ENCODE measurements at regions of chr1 and their contacts with region 1.

Region 1: GRCh38 chr1:173429471-173430402 is 47.4 kb upstream of the PRDX6 start:
- DNase-seq: peak; percentile 86
- H3K4me3 Mint-ChIP-seq: peak overlapping the region; percentile 42
- H3K27ac Mint-ChIP-seq: peak overlapping the region; percentile 43
- H3K4me1 Mint-ChIP-seq: peaks cover 16% of the 10 kb centered on the region
- H3K27me3 Mint-ChIP-seq: no peaks in the 10 kb centered on the region

Region 2: GRCh38 chr1:172117800-172118199 is 1311.9 kb before region 1 on chr1:
- CTCF ChIA-PET with region 1: no interaction called
- intact Hi-C with region 1: no loop called
- DNase-seq: peak; percentile 47
- H3K4me3 Mint-ChIP-seq: no peak overlapping the region
- H3K27ac Mint-ChIP-seq: no peak overlapping the region
- H3K4me1 Mint-ChIP-seq: peaks cover 27% of the 10 kb centered on the region
- H3K27me3 Mint-ChIP-seq: no peaks in the 10 kb centered on the region

Region 3: DNA sequence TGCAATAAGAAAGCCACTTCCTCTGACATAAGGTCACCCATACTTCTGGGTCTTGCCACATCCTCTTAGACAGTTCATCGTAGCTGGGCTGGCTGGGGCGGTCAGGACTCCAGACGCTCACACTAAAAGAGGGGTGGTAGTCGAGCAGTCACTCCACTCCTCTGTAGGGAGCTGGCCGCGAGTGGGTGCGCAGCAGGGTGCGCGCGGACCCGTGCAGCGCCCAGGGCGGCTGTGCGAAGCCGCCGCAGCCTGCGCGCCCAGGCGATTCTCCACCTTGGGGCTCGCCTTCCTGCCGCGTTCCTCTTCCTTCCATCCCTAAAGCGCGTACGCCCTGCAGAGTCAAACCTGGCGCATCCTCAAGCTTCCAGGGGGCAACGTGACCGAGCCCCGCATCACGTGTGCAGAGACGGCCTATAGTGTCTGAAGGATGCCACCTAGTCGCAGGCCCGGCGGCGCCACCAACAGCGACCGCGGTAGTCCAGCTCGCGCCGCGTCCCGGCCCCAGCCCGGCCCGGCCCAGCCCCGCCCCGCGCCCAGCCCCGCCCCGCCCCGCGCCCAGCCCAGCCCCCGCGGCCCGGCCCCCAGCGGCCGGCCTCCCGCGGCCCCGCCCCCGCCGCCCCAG is 47.0 kb after region 1 on chr1:
- CTCF ChIA-PET with region 1: interaction called, 31 read pairs
- intact Hi-C with region 1: loop called (anchors 1 kb)
- DNase-seq: peak; percentile 86
- H3K4me3 Mint-ChIP-seq: peak overlapping the region; percentile 91
- H3K27ac Mint-ChIP-seq: peak overlapping the region; percentile 93
- H3K4me1 Mint-ChIP-seq: peaks cover 58% of the 10 kb centered on the region
- H3K27me3 Mint-ChIP-seq: no peaks in the 10 kb centered on the region

Region 4: GRCh38 chr1:173628888-173629287 is 199.2 kb after region 1 on chr1:
- CTCF ChIA-PET with region 1: interaction called, 6 read pairs
- intact Hi-C with region 1: loop called (anchors 2 kb)
- DNase-seq: peak; percentile 27
- H3K4me3 Mint-ChIP-seq: no peak overlapping the region
- H3K27ac Mint-ChIP-seq: no peak overlapping the region
- H3K4me1 Mint-ChIP-seq: no peaks in the 10 kb centered on the region
- H3K27me3 Mint-ChIP-seq: no peaks in the 10 kb centered on the region

Region 5: GRCh38 chr1:173771560-173771959 is 341.8 kb after region 1 on chr1:
- CTCF ChIA-PET with region 1: interaction called, 4 read pairs
- intact Hi-C with region 1: loop called (anchors 5 kb)
- DNase-seq: no peak
- H3K4me3 Mint-ChIP-seq: no peak overlapping the region
- H3K27ac Mint-ChIP-seq: no peak overlapping the region
- H3K4me1 Mint-ChIP-seq: peaks cover 12% of the 10 kb centered on the region
- H3K27me3 Mint-ChIP-seq: no peaks in the 10 kb centered on the region

Region 6: GRCh38 chr1:174074757-174075156 is 645.0 kb after region 1 on chr1:
- CTCF ChIA-PET with region 1: no interaction called
- intact Hi-C with region 1: loop called (anchors 1 kb)
- DNase-seq: no peak
- H3K4me3 Mint-ChIP-seq: no peak overlapping the region
- H3K27ac Mint-ChIP-seq: no peak overlapping the region
- H3K4me1 Mint-ChIP-seq: no peaks in the 10 kb centered on the region
- H3K27me3 Mint-ChIP-seq: no peaks in the 10 kb centered on the region